MCF 10A (cell line): ENCODE measurements at regions of chr4 and their contacts with region 1.

Region 1: DNA sequence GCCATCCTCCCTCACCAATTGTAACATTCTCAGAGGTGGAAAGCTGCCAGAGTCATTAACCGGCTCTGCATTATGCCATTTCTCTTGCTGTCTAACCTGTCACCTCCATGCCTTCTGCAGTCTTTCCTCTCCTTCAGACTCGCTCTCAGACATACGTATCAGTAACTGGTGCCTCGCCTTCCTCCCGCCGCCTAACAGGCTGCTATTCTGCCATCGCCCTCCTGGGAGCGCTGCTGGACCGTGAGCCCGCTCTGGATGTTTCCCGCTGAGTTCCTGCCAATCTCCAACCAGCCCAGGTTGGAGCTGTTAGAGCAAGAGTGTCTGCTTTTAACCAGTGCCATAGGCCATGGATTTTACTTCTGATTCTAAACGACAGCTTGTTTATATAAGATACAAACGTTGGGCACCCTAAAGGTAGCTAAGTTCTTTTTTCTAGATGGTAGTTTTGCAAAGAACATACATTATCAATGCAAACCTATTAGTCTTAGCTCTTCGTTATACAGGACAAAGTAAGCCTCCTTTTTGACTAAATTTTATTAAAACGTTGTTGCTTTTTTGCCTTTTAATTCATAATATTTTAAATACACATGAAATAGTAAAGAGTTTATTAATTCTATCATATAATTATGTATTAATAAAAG is 59.5 kb upstream of the NEIL3 start:
- DNase-seq: peak; percentile 80
- H3K4me3 Mint-ChIP-seq: peak overlapping the region; percentile 18
- H3K27ac Mint-ChIP-seq: no peak overlapping the region
- H3K4me1 Mint-ChIP-seq: peaks cover 6% of the 10 kb centered on the region
- H3K27me3 Mint-ChIP-seq: no peaks in the 10 kb centered on the region
- CTCF ChIP-seq: peak; percentile 98

Region 2: GRCh38 chr4:177266506-177266905 is 16.3 kb after region 1 on chr4:
- CTCF ChIA-PET with region 1: interaction called, 11 read pairs
- POLR2A ChIA-PET with region 1: no interaction called
- intact Hi-C with region 1: no loop called
- DNase-seq: no peak
- H3K4me3 Mint-ChIP-seq: no peak overlapping the region
- H3K27ac Mint-ChIP-seq: no peak overlapping the region
- H3K4me1 Mint-ChIP-seq: no peaks in the 10 kb centered on the region
- H3K27me3 Mint-ChIP-seq: no peaks in the 10 kb centered on the region
- CTCF ChIP-seq: no peak

Region 3: GRCh38 chr4:177332119-177332518 is 81.9 kb after region 1 on chr4:
- CTCF ChIA-PET with region 1: interaction called, 220 read pairs
- POLR2A ChIA-PET with region 1: interaction called, 4 read pairs
- intact Hi-C with region 1: no loop called
- DNase-seq: no peak
- H3K4me3 Mint-ChIP-seq: no peak overlapping the region
- H3K27ac Mint-ChIP-seq: no peak overlapping the region
- H3K4me1 Mint-ChIP-seq: peaks cover 29% of the 10 kb centered on the region
- H3K27me3 Mint-ChIP-seq: no peaks in the 10 kb centered on the region
- CTCF ChIP-seq: no peak

Region 4: GRCh38 chr4:177380730-177381287 is 130.6 kb after region 1 on chr4:
- CTCF ChIA-PET with region 1: no interaction called
- POLR2A ChIA-PET with region 1: no interaction called
- intact Hi-C with region 1: no loop called
- DNase-seq: peak; percentile 21
- H3K4me3 Mint-ChIP-seq: no peak overlapping the region
- H3K27ac Mint-ChIP-seq: no peak overlapping the region
- H3K4me1 Mint-ChIP-seq: no peaks in the 10 kb centered on the region
- H3K27me3 Mint-ChIP-seq: peaks cover 15% of the 10 kb centered on the region
- CTCF ChIP-seq: no peak

Region 5: GRCh38 chr4:177441803-177442622 is 191.8 kb after region 1 on chr4 and contains the start of gene AGA:
- CTCF ChIA-PET with region 1: interaction called, 3 read pairs
- POLR2A ChIA-PET with region 1: interaction called, 3 read pairs
- intact Hi-C with region 1: loop called (anchors 1 kb)
- DNase-seq: peak; percentile 98
- H3K4me3 Mint-ChIP-seq: peak within 1 kb of the TSS; percentile 93
- H3K27ac Mint-ChIP-seq: peak within 1 kb of the TSS; percentile 95
- H3K4me1 Mint-ChIP-seq: peaks cover 9% of the 10 kb centered on the region
- H3K27me3 Mint-ChIP-seq: no peaks in the 10 kb centered on the region
- CTCF ChIP-seq: no peak
- total RNA-seq, gene AGA: 17.3 and 18.3 TPM in 2 replicates